ENCODE measurements at regions of chr14 and their contacts with region 1.

Region 1: DNA sequence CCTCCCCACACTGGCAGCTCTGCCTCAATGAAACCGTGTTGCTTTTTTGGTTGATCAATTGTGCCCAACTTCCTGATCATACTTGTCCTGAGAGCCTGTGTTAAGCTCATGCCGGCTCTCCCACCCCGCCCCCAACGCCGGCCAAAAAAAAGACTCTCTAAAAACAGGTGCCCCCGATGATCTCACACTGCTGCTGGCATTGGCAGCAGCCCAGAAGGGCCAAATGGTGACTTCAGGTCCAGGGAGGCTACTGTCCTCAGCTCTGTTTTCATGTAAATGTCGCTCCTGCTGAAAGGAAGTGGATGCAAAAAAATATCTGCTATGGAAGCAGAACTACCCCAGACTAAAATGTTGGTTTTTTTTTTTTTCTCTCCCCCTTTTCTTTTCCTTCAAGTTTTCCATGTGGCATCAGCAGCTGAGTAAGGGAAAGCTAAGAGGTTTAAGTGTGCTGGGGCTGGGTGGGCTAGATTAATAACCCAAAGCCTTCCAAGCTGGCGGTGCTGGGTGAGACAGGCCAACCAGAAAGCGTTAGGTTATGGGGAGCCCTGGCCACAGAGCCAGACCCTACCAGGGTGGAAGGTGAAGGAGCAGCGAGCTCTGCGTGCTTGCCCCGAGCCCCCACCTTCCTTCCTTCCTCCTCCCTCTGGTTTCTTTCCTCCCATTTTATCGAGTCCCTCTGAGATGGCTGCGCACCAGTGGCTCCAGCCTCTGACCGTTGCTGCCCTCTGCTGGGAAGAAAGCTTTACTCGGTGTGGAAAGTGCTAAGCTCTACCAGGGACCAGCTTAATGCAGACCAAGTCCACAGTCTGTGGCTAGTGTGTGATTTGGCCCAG is 396.1 kb downstream of the NRXN3 start:
- DNase-seq: peak; percentile 84
- ATAC-seq: peak; percentile 92
- H3K4me3 Mint-ChIP-seq: no peak overlapping the region
- H3K27ac Mint-ChIP-seq: no peak overlapping the region
- H3K4me1 Mint-ChIP-seq: peaks cover 6% of the 10 kb centered on the region
- H3K27me3 Mint-ChIP-seq: peaks cover 2% of the 10 kb centered on the region

Region 2: GRCh38 chr14:77654001-77654441 is 912.2 kb before region 1 on chr14:
- CTCF ChIA-PET with region 1: no interaction called
- POLR2A ChIA-PET with region 1: no interaction called
- intact Hi-C with region 1: loop called in 1 of 2 experiments (anchors 10 kb)
- DNase-seq: no peak
- ATAC-seq: no peak
- H3K4me3 Mint-ChIP-seq: no peak overlapping the region
- H3K27ac Mint-ChIP-seq: no peak overlapping the region
- H3K4me1 Mint-ChIP-seq: no peaks in the 10 kb centered on the region
- H3K27me3 Mint-ChIP-seq: no peaks in the 10 kb centered on the region

Region 3: GRCh38 chr14:77862154-77862786 is 704.0 kb before region 1 on chr14:
- CTCF ChIA-PET with region 1: interaction called, 13 read pairs
- POLR2A ChIA-PET with region 1: no interaction called
- intact Hi-C with region 1: loop called (anchors 1 to 2 kb)
- DNase-seq: peak; percentile 88
- ATAC-seq: peak; percentile 77
- H3K4me3 Mint-ChIP-seq: no peak overlapping the region
- H3K27ac Mint-ChIP-seq: no peak overlapping the region
- H3K4me1 Mint-ChIP-seq: no peaks in the 10 kb centered on the region
- H3K27me3 Mint-ChIP-seq: no peaks in the 10 kb centered on the region

Region 4: GRCh38 chr14:78022059-78022458 is 544.2 kb before region 1 on chr14:
- CTCF ChIA-PET with region 1: interaction called, 37 read pairs
- POLR2A ChIA-PET with region 1: no interaction called
- intact Hi-C with region 1: loop called (anchors 1 kb)
- DNase-seq: peak; percentile 88
- ATAC-seq: peak; percentile 88
- H3K4me3 Mint-ChIP-seq: no peak overlapping the region
- H3K27ac Mint-ChIP-seq: no peak overlapping the region
- H3K4me1 Mint-ChIP-seq: no peaks in the 10 kb centered on the region
- H3K27me3 Mint-ChIP-seq: peaks cover 19% of the 10 kb centered on the region

Region 5: DNA sequence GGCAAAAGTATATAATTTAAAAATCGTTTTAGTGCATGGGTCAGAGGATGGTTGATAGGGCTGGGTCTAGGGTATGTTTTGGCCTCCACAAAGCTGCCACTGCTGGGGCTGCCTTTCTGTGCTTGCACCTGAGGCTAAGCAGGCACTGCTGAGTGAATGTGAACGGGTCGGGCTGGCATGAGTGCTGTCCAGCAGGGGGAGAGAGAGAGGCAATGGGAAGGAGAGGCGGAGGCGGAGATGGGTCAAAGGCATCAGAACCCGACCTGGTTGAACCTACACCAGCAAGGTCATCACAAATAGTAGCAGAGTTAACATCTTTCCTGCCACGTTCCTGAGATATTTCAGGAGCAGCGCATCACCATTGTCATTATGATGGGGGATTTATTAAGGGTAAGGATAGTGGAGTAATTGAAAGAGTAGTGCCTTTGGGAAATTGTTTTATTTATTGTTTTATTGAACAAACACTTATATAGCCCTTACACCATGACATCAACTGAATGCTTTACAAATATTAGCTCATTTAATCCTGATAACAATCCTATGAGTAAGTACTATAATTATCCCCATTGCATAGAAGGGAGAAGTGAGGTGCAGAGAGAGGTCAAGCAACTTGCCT is 401.9 kb before region 1 on chr14:
- CTCF ChIA-PET with region 1: no interaction called
- POLR2A ChIA-PET with region 1: no interaction called
- intact Hi-C with region 1: loop called (anchors 10 kb)
- DNase-seq: peak; percentile 53
- ATAC-seq: no peak
- H3K4me3 Mint-ChIP-seq: no peak overlapping the region
- H3K27ac Mint-ChIP-seq: no peak overlapping the region
- H3K4me1 Mint-ChIP-seq: no peaks in the 10 kb centered on the region
- H3K27me3 Mint-ChIP-seq: peaks cover 24% of the 10 kb centered on the region

Region 6: DNA sequence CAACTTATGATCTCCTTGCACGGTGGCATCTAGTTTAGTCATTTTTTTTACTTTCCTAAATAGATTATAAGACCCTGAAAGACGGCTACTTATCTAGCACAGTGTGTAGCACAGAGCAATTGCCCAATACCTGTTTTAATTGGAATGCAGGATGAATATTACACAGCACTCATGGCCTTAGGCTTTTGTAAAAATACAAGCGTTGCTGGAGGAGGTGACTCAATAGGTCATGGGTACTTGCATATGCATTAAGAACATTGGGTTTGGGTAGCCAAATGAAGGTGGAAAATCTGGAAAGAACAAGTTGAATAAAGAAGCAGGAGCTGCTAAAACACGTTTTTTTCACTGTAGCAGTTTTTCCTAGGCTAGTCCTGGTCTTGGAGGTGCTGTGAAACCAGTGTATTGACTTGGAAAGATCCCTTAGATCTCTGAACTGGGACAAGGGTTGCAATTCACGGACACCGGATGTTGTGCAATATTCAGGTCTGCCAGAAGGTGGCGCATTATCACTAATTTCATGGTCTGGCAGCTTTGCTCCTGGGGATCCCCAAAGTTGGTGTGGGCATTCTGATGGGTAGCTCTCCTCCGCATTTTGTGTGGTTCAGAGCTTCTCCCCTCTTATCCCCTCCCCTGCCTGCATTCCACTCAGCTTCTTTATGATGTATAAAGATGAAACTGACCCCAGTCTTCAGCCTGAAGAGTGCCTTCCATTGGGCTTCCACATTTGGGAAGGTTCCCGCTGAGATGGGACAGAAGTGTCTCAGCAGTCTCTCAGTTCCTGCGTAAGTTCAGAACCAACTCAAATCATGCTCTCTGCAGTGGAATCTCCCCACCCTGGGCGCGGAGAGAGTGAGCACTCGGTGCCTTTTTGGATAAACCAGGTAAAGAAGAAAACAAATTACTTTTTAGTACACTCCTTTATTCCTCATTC is 117.8 kb before region 1 on chr14:
- CTCF ChIA-PET with region 1: interaction called, 6 read pairs
- POLR2A ChIA-PET with region 1: no interaction called
- intact Hi-C with region 1: loop called (anchors 1 to 10 kb)
- DNase-seq: peak; percentile 70
- ATAC-seq: no peak
- H3K4me3 Mint-ChIP-seq: no peak overlapping the region
- H3K27ac Mint-ChIP-seq: no peak overlapping the region
- H3K4me1 Mint-ChIP-seq: no peaks in the 10 kb centered on the region
- H3K27me3 Mint-ChIP-seq: peaks cover 2% of the 10 kb centered on the region

Region 7: GRCh38 chr14:78581229-78581628 is 15.0 kb after region 1 on chr14:
- CTCF ChIA-PET with region 1: interaction called, 11 read pairs
- POLR2A ChIA-PET with region 1: no interaction called
- intact Hi-C with region 1: no loop called
- DNase-seq: no peak
- ATAC-seq: no peak
- H3K4me3 Mint-ChIP-seq: no peak overlapping the region
- H3K27ac Mint-ChIP-seq: no peak overlapping the region
- H3K4me1 Mint-ChIP-seq: no peaks in the 10 kb centered on the region
- H3K27me3 Mint-ChIP-seq: peaks cover 14% of the 10 kb centered on the region